HEK293 (cell line): ENCODE measurements at regions of chr1 and their contacts with region 1.

Region 1: DNA sequence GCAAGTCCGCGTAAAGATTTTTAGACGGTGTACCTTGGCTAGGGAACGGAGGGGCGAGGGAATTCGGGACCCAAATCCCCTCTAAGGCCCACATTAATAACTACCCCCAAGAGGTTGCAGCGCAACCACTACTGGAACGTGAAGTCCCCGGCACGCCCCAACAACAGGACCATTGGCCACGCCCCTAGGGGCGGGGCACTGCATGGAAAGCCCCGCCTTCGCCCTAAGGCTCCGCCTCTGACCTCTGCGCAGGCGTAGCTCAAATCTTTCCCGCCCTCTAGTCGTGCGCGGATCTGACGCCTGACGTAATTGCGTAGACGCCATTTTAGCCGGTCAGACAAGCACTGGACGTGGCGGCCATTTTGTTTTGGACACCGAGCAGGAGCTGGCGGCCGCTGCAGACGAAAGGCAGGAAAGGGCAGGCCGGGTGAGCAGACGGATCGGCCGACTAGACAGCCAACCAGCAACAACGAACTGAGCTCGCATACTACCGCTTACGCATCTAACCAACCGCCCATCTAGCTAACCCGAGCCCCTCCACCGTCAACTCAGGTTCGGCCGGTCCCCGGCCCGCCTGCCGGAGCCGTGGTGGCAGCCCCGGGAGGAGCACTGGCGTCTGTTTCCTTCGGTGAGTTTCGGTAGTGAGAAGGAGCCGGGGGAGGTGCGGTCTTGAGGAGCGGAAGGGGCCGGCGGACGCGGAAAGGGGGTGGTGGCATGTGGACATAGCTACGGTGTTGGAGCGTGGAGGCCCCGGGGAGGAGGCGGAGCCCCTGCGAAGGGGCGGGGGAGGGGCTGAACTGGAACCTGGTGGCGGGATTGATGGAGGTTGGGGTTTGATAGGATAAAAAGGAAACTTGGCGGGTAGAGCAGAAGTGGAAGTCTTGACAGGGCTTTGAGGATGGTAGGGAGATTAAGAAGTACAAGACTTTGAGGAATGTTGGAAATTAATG is at the start of gene CHTOP:
- H3K4me3 ChIP-seq: peak within 1 kb of the TSS; percentile 79
- H3K27ac ChIP-seq: peak within 1 kb of the TSS; percentile 99
- H3K4me1 ChIP-seq: no peaks in the 10 kb centered on the region
- CTCF ChIP-seq: peak; percentile 30; the same call in 1 of the 2 replicates

Region 2: DNA sequence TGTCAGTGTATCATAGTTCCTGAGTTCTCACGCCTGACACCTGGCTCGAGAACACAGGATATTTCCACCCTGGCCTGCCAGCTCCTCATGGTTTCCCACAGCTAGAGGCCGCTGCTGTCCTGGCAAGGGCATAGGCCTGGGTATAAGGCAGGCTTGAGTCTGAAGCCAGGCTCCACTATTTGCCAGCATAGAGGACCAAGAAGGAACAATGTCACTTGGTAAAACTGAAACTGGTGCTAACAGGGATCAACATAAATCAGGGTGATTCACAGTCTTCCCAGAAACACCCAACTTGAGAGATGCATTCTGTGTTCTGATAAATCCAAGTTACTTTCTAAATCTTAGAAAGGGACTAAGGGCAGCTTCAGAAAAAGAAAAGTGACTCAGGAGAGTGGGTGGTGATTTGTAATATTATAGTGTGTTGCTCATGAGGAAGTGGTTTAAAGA is 61.4 kb before region 1 on chr1:
- CTCF ChIA-PET with region 1: interaction called, 37 read pairs
- POLR2A ChIA-PET with region 1: interaction called, 12 read pairs
- H3K4me3 ChIP-seq: no peak overlapping the region
- H3K27ac ChIP-seq: no peak overlapping the region
- H3K4me1 ChIP-seq: no peaks in the 10 kb centered on the region
- CTCF ChIP-seq: peak; percentile 69; the same call in 1 of the 2 replicates

Region 3: GRCh38 chr1:153617675-153618074 is 16.3 kb before region 1 on chr1:
- CTCF ChIA-PET with region 1: interaction called, 18 read pairs
- POLR2A ChIA-PET with region 1: interaction called, 17 read pairs
- H3K4me3 ChIP-seq: no peak overlapping the region
- H3K27ac ChIP-seq: no peak overlapping the region
- H3K4me1 ChIP-seq: no peaks in the 10 kb centered on the region
- CTCF ChIP-seq: no peak

Region 4: GRCh38 chr1:153658400-153659174 is 24.6 kb after region 1 on chr1 and contains the start of gene SNAPIN:
- CTCF ChIA-PET with region 1: no interaction called
- POLR2A ChIA-PET with region 1: interaction called, 24 read pairs
- H3K4me3 ChIP-seq: peak within 1 kb of the TSS; percentile 87
- H3K27ac ChIP-seq: peak within 1 kb of the TSS; percentile 78
- H3K4me1 ChIP-seq: 0 out of 2 replicates have a peak, but pooled peaks cover 2% of the 10 kb centered on the region
- CTCF ChIP-seq: peak; percentile 76

Region 5: GRCh38 chr1:153682730-153683129 is 48.7 kb after region 1 on chr1:
- CTCF ChIA-PET with region 1: no interaction called
- POLR2A ChIA-PET with region 1: no interaction called
- H3K4me3 ChIP-seq: no peak overlapping the region
- H3K27ac ChIP-seq: no peak overlapping the region
- H3K4me1 ChIP-seq: no peaks in the 10 kb centered on the region; the same call in 1 of the 2 replicates
- CTCF ChIP-seq: no peak

Region 6: DNA sequence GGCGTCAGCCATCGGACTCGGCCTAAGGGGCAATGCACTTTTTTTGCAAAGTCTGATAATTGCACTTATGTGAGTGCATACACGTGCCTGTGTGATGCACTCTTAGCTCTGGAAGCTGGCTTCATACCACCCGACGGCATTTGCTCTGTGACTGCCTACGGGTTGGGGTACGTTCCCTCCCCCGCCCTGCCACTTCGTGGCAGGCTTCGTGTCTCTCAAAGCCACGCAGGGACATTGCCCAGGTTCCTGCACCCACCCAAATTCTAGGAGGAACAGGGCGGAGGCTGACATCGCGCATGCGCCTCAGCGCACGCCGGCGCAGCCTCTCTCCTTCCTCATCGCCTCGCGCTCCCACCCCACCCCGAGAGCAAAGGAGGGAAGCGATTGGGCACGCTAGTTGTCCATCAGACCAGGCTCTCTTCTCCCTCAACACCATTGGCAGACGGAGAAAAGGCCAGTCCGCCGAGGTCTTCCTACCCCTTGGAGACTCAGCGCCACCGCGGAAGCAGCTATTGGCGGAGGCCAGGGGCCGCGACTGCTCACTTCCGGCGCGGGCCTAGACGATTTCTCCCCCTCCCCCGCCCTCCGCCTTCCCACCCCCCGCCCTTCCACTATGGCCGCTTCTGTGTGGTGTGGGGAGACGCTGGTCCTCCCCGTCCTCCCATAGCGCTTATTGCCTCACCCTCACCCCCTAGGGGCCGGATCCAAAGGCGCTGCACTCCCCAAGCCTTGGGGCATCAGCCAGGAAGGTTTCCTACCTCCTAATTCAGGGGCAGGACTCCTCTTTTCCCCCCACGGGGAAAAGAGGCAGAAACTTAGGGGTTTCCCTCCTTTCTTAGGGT is 93.7 kb after region 1 on chr1 and contains the start of gene INTS3:
- CTCF ChIA-PET with region 1: no interaction called
- POLR2A ChIA-PET with region 1: interaction called, 14 read pairs
- H3K4me3 ChIP-seq: peak within 1 kb of the TSS; percentile 76
- H3K27ac ChIP-seq: peak within 1 kb of the TSS; percentile 85
- H3K4me1 ChIP-seq: peaks cover 3% of the 10 kb centered on the region; the same call in 1 of the 2 replicates
- CTCF ChIP-seq: no peak